Heart right ventricle (tissue), 16 donors: ENCODE measurements at regions of chr15 and their contacts with region 1.

Region 1: DNA sequence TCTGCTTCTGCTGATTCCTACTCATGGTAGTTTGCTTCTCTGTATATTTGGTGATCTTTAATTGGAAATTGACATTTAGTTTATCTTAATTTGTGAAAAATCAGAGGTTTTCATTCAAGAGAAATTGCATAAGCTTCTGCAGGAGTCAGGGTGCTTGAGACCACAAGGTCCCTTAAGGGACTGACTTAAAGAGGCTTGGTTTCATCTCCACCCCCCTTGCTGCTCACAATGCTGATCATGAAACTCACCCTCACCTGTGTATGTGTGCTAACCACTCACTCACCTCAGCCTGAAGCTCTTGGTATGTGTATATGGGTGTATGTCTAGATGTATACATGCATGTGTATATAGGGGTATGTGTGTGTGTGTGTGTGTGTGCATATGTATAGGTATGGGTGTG is 11.4 kb downstream of the PGPEP1L start:
- DNase-seq: no peak
- ATAC-seq: no peak
- H3K4me3 ChIP-seq: no peak overlapping the region
- H3K27ac ChIP-seq: no peak overlapping the region
- H3K4me1 ChIP-seq: peaks cover 0 to 3% (median 0%) of the 10 kb centered on the region in 9 donors
- H3K27me3 ChIP-seq: no peaks in the 10 kb centered on the region
- CTCF ChIP-seq: no peak

Region 2: GRCh38 chr15:99169769-99170311 is 173.7 kb after region 1 on chr15:
- intact Hi-C with region 1: no loop called
- DNase-seq: no peak
- ATAC-seq: peak in 7 of 8 donors; percentile 14 to 69 (median 48)
- H3K4me3 ChIP-seq: no peak overlapping the region
- H3K27ac ChIP-seq: peak overlapping the region; percentile 41 to 85 (median 80)
- H3K4me1 ChIP-seq: peaks cover 5 to 64% (median 31%) of the 10 kb centered on the region in 9 donors
- H3K27me3 ChIP-seq: no peaks in the 10 kb centered on the region
- CTCF ChIP-seq: no peak

Region 3: DNA sequence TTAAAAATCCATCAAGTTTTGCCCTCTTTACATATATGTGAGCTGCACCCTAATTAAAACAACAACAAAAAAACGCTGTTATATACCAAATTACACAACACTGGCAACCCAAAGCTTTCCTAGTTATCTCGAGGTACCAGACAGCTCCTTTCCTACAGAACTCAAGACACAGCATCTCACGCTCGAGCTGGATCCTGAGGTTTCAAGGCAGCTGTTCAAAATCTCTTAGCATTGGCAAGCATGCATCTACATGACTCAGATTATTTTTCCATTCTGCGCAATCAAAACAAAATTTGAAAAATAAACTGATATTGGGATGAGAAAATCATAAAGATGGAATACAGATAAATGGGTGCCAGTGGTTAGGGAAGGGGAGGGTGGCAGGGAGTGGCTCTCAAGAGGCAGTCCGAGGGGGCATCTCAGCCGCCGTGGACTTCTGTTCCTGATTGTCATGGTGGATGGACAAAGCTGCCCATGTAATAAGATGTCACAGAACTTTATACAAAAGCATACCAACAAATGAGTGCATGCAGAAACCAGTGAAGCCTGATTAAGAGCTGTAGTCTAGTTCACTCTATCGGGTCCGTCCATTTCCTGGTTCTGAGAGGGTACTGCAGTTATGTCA is 1254.1 kb after region 1 on chr15:
- intact Hi-C with region 1: loop called in 1 of 10 experiments (anchors 10 kb)
- DNase-seq: no peak
- ATAC-seq: peak in 2 of 8 donors; percentile 43 to 63
- H3K4me3 ChIP-seq: no peak overlapping the region
- H3K27ac ChIP-seq: no peak overlapping the region
- H3K4me1 ChIP-seq: peaks cover 0 to 11% (median 0%) of the 10 kb centered on the region in 9 donors
- H3K27me3 ChIP-seq: no peaks in the 10 kb centered on the region
- CTCF ChIP-seq: no peak